ENCODE measurements at regions of chr10 and their contacts with region 1.

Region 1: GRCh38 chr10:28137907-28138880 is 139.3 kb upstream of the ODAD2 start:
- DNase-seq: peak; percentile 60
- H3K4me3 ChIP-seq: peak overlapping the region in 1 of 3 experiments; percentile 17
- H3K27ac ChIP-seq: peak overlapping the region; percentile 76
- H3K4me1 ChIP-seq: peaks cover 45% of the 10 kb centered on the region
- H3K27me3 ChIP-seq: no peaks in the 10 kb centered on the region
- CTCF ChIP-seq: no peak
- POLR2A ChIP-seq: no peak

Region 2: DNA sequence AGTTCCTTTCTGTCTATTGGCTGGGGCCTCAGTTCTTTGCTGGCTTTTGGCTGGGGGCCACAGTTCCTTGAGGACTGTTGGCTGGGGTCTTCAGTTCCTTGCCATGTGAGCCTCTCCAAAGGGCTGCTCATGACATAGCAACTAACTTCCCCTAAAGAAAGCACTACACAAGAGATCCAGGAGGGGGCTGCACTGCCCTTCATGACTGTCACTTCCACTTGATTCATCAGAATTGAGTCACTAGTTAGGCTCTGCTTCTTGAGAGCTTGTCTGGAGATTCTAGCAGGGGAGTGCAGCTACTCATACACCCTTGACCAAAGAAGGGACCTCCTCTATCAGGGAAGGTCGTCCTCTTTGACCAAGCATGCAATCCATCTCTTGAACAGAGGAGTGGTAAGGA is 354.5 kb before region 1 on chr10:
- CTCF ChIA-PET with region 1: interaction called, 19 read pairs
- POLR2A ChIA-PET with region 1: no interaction called
- dilution Hi-C with region 1: no loop called
- intact Hi-C with region 1: loop called (anchors 2 kb)
- DNase-seq: peak; percentile 64
- H3K4me3 ChIP-seq: no peak overlapping the region
- H3K27ac ChIP-seq: no peak overlapping the region
- H3K4me1 ChIP-seq: no peaks in the 10 kb centered on the region
- H3K27me3 ChIP-seq: peaks cover 3 to 5% of the 10 kb centered on the region in 2 experiments
- CTCF ChIP-seq: peak; percentile 54 to 68
- POLR2A ChIP-seq: no peak

Region 3: DNA sequence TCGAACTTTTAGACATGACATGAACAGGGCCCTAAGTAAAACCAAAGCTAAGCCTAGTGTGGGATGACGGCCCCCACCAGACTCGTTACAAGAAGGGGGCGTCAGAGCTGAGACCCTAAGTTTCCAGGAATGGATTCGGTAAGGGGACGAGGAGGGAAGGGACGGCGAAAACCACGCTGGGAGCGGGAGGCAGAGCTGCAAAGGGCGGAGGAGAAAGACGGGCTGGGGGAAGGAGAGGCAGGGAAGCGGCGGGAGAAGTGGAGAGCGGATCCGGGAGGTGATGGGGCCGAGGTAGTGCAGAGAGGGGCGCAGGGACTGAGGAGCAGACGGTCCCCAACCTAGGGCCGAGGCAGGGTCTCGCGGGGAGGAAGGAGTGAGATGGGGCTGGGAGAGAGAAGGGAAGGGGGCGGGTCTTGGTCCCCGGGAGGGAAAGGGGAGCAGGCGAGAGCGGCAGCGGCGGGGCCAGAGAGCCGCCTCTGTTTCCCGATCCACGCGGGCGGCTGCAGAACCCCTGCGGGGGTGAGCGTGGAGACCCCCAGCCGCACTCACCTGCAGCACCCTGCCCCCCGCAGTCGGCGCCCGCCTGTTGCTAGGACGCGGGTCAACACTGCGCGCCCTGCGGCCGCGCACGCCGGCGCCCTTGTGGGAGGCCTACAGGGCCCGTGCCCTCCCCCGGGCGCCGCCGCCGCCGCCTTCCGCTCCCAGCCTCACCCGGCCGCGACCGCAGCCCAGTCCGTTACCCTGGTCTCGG is 139.8 kb before region 1 on chr10:
- CTCF ChIA-PET with region 1: no interaction called
- POLR2A ChIA-PET with region 1: no interaction called
- dilution Hi-C with region 1: no loop called
- intact Hi-C with region 1: loop called (anchors 5 kb)
- DNase-seq: peak; percentile 51
- H3K4me3 ChIP-seq: peak overlapping the region; percentile 41 to 87 (median 71)
- H3K27ac ChIP-seq: peak overlapping the region; percentile 32
- H3K4me1 ChIP-seq: peaks cover 6% of the 10 kb centered on the region
- H3K27me3 ChIP-seq: no peaks in the 10 kb centered on the region
- CTCF ChIP-seq: no peak
- POLR2A ChIP-seq: peak; percentile 76